Activated T-helper 1 cell treated with anti-CD3 and anti-CD28 coated beads, Interleukin-12 subunit alpha, Interleukin-12 subunit beta, Interleukin-2, Interleukin-4 antibody, amounts not matched to agents 30 ng/mL and 10 ng/mL and 1 ng/mL, durations not matched to agents 14 hours and 24 hours and 36 hours (primary cell): ENCODE measurements at regions of chr5 and their contacts with region 1.

Region 1: DNA sequence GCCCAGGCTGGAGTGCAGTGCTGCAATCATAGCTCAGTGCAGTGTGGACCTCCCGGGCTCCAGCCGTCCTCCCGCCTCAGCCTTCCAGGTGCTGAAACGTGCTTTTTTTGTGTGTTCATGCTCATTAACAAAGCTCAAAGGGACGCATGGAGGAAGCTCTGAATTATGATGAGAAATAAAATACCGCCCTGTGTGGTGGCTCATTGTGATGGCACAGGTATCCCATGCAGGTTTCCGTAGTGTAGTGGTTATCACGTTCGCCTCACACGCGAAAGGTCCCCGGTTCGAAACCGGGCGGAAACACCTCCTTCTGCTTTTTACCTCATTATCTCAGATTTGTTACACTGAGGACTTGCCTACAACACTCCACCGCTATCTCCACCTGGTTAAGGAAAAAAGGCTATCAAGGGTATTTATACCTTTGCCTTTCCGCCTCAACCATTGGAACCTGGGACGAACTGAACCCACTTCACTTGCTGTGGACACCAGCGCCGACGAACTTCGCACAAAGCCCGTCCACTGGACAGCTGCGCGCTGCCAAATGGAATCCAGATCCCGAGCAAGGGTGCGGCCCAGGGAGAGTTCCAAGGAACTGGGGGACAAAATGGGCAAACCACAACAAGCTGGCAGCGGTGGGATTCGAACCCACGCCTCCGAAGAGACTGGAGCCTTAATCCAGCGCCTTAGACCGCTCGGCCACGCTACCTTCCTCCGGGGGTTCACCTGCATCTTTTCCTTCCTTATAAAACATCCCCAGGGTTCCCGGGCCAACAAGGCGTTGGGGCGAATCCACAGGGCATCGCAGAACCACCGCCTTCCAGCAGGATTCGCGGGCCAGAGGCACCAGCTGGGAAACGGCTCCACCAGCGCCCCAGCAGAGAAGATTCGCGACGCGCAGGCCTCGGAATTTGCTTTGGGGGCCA is 26.3 kb downstream of the OR2V2 start:
- DNase-seq: peak; percentile 44
- H3K4me3 Mint-ChIP-seq: peak overlapping the region; percentile 86
- H3K27ac Mint-ChIP-seq: peak overlapping the region; percentile 87
- H3K4me1 Mint-ChIP-seq: peaks cover 40% of the 10 kb centered on the region
- H3K27me3 Mint-ChIP-seq: peaks cover 42% of the 10 kb centered on the region

Region 2: GRCh38 chr5:181098762-181099601 is 74.7 kb before region 1 on chr5:
- intact Hi-C with region 1: loop called (anchors 5 kb)
- DNase-seq: no peak
- H3K4me3 Mint-ChIP-seq: no peak overlapping the region
- H3K27ac Mint-ChIP-seq: no peak overlapping the region
- H3K4me1 Mint-ChIP-seq: peaks cover under 1% of the 10 kb centered on the region
- H3K27me3 Mint-ChIP-seq: peaks cover 20% of the 10 kb centered on the region

Region 3: DNA sequence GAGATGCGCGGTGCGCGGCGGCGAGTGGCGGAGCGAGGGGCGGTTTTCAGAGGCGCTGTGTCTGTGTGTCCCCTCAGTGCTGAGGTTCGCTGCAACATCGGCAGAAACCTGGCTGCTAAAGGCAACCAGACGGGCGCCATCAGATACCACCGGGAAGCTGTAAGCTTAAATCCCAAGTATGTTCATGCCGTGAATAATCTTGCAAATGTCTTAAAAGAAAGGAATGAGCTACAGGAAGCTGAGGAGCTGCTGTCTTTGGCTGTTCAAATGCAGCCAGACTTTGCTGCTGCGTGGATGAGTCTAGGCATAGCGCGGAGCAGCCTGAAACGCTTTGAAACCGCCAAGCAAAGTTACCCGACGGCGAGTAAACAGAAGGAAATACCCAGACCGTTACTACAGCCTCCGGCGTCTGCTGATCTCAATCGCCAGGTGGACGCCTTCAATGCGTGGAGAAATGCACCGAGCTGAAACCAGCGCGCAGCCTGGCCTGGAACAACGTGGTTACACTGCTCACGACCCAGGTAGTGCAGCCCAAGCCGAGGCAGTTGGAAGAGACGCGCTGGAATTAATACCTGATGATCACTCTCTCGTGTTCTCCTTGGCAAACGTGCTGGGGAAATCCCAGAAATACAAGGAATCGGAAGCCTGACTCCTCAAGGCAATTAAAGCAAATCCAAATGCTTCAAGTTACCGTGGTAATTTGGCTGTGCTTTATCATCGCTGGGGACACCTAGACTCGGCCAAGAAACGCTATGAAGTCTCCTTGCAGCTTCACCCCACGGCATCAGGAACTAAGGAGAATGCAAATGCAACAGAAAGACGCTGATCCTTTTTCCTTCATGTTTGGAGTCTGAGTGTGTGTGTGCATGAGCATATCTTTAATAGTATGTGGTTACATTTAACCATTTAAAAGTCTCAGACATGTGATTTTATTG is 58.6 kb before region 1 on chr5:
- intact Hi-C with region 1: loop called (anchors 5 kb)
- DNase-seq: no peak
- H3K4me3 Mint-ChIP-seq: peak overlapping the region; percentile 20
- H3K27ac Mint-ChIP-seq: no peak overlapping the region
- H3K4me1 Mint-ChIP-seq: peaks cover 8% of the 10 kb centered on the region
- H3K27me3 Mint-ChIP-seq: peaks cover 51% of the 10 kb centered on the region

Region 4: DNA sequence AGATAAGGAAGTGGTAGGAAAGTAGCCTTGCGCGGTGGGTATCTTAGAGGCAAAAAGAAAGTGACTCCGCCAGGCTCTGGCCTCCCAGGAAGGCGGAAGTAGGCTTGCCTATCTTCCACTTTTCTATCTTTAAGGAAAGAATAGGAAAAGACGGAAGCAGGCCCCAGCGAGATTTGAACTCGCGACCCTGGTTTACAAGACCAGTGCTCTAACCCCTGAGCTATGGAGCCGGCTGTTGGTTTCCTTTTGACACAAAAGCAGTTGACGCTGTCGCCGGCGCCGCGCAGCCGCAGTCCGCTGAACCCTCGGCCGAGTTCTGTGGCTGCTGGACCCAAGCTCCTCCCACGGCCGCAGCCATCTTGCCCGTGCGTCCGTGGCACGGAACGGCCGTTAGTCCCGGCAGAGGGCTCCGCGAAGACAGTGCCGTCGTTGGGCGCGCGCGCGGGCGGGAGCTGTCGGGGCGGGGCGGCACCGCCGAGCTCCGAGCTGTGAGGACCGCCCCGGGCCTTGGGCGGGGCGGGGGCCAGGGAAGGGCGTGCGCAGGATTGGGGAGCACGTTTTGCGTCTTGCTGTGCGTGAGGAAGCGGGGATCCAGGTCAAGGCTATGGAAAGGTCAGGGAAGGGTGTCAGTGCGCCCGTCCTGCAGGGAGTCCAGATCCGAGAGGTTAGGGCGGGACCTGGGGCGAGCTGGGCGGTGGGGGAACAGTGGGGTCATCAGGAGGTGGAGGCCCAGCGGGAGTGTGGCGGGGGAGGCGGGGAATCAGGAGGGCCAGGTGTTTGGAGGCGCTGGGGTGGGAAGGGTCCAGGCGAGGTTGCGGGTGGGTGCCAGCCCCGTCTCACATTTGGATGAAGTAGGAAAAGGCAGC is 18.1 kb after region 1 on chr5:
- intact Hi-C with region 1: loop called (anchors 2 kb)
- DNase-seq: peak; percentile 94
- H3K4me3 Mint-ChIP-seq: peak overlapping the region; percentile 94
- H3K27ac Mint-ChIP-seq: peak overlapping the region; percentile 96
- H3K4me1 Mint-ChIP-seq: peaks cover 43% of the 10 kb centered on the region
- H3K27me3 Mint-ChIP-seq: peaks cover 8% of the 10 kb centered on the region

Region 5: DNA sequence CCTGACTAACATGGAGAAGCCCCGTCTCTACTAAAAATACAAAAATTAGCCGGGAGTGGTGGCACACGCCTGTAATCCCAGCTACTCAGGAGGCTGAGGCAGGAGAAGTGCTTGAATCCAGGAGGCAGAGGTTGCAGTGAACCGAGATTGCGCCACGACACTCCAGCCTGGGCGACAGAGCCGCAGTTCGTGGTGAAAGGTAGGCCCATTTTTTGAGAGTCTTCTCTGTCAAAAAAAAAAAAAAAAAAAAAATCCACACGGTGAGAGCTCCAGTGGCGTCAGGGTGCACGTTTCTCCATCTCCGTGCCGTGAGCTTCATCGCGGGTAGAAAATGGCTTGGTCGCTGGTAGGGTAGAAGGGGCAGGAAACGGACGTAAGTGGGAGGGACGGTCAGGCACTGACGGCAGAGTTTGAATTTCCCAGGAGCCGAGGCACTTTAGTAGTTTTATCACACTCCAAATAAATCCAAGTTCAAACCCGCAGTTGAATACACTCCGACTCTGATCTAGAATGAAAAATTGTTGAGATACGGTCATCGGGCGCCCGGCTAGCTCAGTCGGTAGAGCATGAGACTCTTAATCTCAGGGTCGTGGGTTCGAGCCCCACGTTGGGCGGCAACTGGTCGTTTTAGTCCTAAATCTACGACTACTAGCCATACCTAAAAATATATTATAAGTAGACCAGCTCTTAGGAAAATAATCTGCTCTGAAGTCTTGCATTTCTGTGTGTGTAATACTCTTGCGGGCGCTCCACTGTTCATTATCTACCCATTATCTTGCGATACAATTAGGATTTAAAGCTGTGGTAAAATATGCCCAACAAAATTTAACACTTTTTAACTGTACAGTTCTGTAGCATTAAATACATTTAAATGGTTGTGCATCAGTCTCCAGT is 33.8 kb after region 1 on chr5:
- intact Hi-C with region 1: loop called (anchors 2 kb)
- DNase-seq: peak; percentile 59
- H3K4me3 Mint-ChIP-seq: peak overlapping the region; percentile 89
- H3K27ac Mint-ChIP-seq: peak overlapping the region; percentile 95
- H3K4me1 Mint-ChIP-seq: peaks cover 34% of the 10 kb centered on the region
- H3K27me3 Mint-ChIP-seq: peaks cover 28% of the 10 kb centered on the region

Region 6: DNA sequence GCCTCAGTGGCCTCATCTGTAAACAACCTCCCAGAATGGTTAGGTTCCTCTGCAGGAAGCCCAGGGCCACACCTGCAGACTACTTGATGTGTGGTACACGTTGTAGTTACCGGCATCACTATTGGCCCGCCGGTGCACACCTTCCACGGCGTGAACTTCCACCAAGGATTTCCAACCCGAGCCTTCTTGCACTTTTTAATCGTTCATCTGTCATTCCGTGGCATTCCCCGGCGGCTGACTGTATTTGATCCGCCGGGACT is 44.1 kb after region 1 on chr5:
- intact Hi-C with region 1: loop called (anchors 1 kb)
- DNase-seq: no peak
- H3K4me3 Mint-ChIP-seq: peak overlapping the region; percentile 87
- H3K27ac Mint-ChIP-seq: peak overlapping the region; percentile 91
- H3K4me1 Mint-ChIP-seq: peaks cover 58% of the 10 kb centered on the region
- H3K27me3 Mint-ChIP-seq: peaks cover 16% of the 10 kb centered on the region